ENCODE measurements at regions of chr3 and their contacts with region 1.

Region 1: GRCh38 chr3:150721285-150722130 is 17.8 kb upstream of the ERICH6 start:
- DNase-seq: no peak
- H3K4me3 ChIP-seq: peak overlapping the region; percentile 2 to 15
- H3K27ac ChIP-seq: peak overlapping the region; percentile 57
- H3K4me1 ChIP-seq: peaks cover 17% of the 10 kb centered on the region
- H3K27me3 ChIP-seq: no peaks in the 10 kb centered on the region
- CTCF ChIP-seq: peak; percentile 59 to 89 (median 89)
- POLR2A ChIP-seq: no peak

Region 2: DNA sequence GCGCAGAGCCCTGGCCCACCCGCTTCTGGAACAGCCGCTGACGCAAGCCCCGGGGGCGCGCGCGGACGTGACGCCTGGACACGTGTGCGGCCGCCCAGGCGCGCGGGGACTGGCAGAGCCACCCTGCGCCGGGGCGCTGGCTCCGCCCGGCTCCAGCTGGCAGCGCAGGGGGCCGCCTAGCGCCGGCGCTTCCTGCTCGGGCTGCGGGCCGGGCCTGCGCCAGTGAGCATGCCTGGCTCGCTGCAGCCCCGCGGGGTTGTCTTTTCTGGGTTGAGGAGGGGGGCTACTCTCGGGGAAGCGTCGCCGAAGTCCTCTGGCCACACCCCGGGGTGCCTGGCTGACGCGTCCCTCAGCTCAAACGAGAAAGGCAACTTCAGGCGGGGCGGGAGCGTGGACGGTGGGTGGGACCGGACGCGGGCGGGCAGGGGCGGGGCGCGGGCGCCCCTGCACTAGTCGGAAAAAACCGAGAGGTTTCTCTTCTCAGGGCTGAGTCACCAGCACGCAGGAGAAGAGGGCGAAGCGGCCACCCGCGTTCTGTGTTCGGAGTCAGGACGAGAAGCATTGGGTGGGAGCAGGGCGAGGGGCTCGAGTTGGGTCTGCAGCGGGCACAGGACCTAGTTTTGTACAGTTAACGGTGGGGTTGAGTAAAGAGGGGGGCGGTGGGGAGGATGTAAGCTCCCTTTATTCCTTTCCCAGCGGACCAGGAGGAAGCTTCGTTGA is 41.8 kb after region 1 on chr3 and contains the start of gene SIAH2:
- intact Hi-C with region 1: loop called (anchors 5 kb)
- DNase-seq: peak in 1 of 2 donors; percentile 99
- H3K4me3 ChIP-seq: peak within 1 kb of the TSS; percentile 77 to 96
- H3K27ac ChIP-seq: peak within 1 kb of the TSS; percentile 99
- H3K4me1 ChIP-seq: peaks cover 41% of the 10 kb centered on the region
- H3K27me3 ChIP-seq: no peaks in the 10 kb centered on the region
- CTCF ChIP-seq: no peak
- POLR2A ChIP-seq: peak in 1 of 2 donors; percentile 86
- total RNA-seq, gene SIAH2: 71.0 TPM

Region 3: DNA sequence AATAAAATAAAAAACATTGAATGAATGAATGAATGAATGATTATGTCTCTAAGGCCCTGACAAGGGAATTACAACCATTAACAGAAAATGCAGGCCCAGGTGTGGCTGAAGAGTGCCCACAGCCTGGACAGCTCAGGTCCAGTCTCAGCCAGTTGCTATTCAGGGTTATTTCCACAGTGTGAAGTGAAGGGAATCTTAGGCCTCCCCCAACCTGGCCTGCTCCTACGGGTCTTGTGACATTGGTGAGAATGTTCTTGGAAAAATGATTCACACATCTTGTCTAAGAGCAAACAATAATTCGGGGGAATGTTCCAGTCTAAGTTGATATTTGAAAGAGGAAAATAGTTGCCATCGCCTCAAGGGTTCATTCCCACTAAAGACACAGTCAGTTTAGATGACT is 146.8 kb after region 1 on chr3:
- intact Hi-C with region 1: loop called (anchors 5 kb)
- DNase-seq: no peak
- H3K4me3 ChIP-seq: no peak overlapping the region
- H3K27ac ChIP-seq: peak overlapping the region; percentile 14
- H3K4me1 ChIP-seq: no peaks in the 10 kb centered on the region
- H3K27me3 ChIP-seq: no peaks in the 10 kb centered on the region
- CTCF ChIP-seq: no peak
- POLR2A ChIP-seq: no peak

Region 4: GRCh38 chr3:151146071-151146730 is 424.7 kb after region 1 on chr3:
- intact Hi-C with region 1: loop called (anchors 2 kb)
- DNase-seq: no peak
- H3K4me3 ChIP-seq: no peak overlapping the region
- H3K27ac ChIP-seq: peak overlapping the region; percentile 72
- H3K4me1 ChIP-seq: peaks cover 12% of the 10 kb centered on the region
- H3K27me3 ChIP-seq: no peaks in the 10 kb centered on the region
- CTCF ChIP-seq: peak; percentile 57 to 92 (median 83)
- POLR2A ChIP-seq: no peak

Measured in vagina (tissue), 2 donors.